SK-N-SH (cell line): ENCODE measurements at regions of chr17 and their contacts with region 1.

Region 1: GRCh38 chr17:59753522-59754467 is 46.3 kb downstream of the VMP1 start:
- DNase-seq: peak; percentile 78
- H3K4me3 ChIP-seq: peak overlapping the region in 1 of 2 experiments; percentile 40; a peak in 1 of 4 replicates
- H3K27ac ChIP-seq: peak overlapping the region; percentile 91 to 99
- H3K4me1 ChIP-seq: peaks cover 0 to 40% of the 10 kb centered on the region in 2 experiments; a peak in 3 of 4 replicates
- H3K27me3 ChIP-seq: no peaks in the 10 kb centered on the region
- CTCF ChIP-seq: peak; percentile 92
- EP300 ChIP-seq: no peak
- RAD21 ChIP-seq: peak; percentile 98

Region 2: GRCh38 chr17:59693582-59693981 is 60.2 kb before region 1 on chr17:
- CTCF ChIA-PET with region 1: no interaction called
- POLR2A ChIA-PET with region 1: no interaction called
- DNase-seq: no peak
- H3K4me3 ChIP-seq: no peak overlapping the region
- H3K27ac ChIP-seq: no peak overlapping the region
- H3K4me1 ChIP-seq: peaks cover 0 to 2% of the 10 kb centered on the region in 2 experiments; a peak in 2 of 4 replicates
- H3K27me3 ChIP-seq: no peaks in the 10 kb centered on the region
- CTCF ChIP-seq: no peak
- EP300 ChIP-seq: no peak
- RAD21 ChIP-seq: no peak

Region 3: GRCh38 chr17:59734226-59734625 is 19.6 kb before region 1 on chr17:
- CTCF ChIA-PET with region 1: interaction called, 15 read pairs
- POLR2A ChIA-PET with region 1: no interaction called
- DNase-seq: no peak
- H3K4me3 ChIP-seq: no peak overlapping the region
- H3K27ac ChIP-seq: no peak overlapping the region
- H3K4me1 ChIP-seq: no peaks in the 10 kb centered on the region
- H3K27me3 ChIP-seq: no peaks in the 10 kb centered on the region
- CTCF ChIP-seq: no peak
- EP300 ChIP-seq: no peak
- RAD21 ChIP-seq: no peak

Region 4: DNA sequence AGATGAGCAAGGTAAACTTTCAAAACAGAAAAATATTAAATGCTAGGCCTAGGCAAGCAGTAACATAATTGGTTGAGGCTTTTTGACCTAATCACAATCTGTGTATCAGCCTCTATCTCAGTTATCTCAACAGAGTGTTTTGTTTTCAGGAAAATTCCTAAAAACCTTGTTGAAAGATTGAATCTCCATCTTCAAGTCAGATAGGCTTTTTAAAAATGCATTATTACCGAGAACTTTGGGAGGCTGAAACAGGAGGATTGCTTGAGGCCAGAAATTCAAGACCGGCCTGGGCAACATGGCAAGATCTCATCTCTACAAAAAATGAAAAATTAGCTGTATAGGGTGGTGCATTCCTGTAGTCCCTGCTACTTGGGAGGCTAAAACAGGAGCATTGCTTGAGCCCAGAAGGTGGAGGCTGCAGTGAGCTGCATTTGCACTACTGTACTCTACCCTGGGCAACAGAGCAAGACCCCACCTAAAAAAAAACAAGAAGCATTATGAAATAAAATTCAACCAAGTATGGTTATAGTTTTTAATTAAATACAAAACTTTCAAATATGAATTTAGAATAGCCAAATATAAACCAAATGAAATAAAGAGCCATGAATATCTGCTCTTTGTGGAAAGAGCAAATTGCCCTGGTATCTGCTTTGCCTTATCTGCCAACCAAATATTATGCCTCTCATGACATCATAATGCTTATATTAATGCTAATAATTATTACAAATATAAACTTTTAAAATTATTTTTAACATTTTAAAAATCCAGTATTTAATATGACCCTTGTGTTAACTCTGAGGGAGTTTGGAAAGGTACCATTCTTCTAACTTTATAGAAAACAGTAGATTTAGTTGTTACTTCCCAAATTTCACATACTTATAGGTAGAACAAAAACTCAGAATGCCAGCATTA is 22.2 kb after region 1 on chr17:
- CTCF ChIA-PET with region 1: interaction called, 12 read pairs
- POLR2A ChIA-PET with region 1: no interaction called
- DNase-seq: no peak
- H3K4me3 ChIP-seq: no peak overlapping the region
- H3K27ac ChIP-seq: peak overlapping the region in 1 of 2 experiments; percentile 26; a peak in 2 of 4 replicates
- H3K4me1 ChIP-seq: 0 out of 4 replicates have a peak, but pooled peaks cover 0 to 10% of the 10 kb centered on the region in 2 experiments
- H3K27me3 ChIP-seq: no peaks in the 10 kb centered on the region
- CTCF ChIP-seq: no peak
- EP300 ChIP-seq: no peak
- RAD21 ChIP-seq: no peak

Region 5: GRCh38 chr17:59830007-59830630 is 76.3 kb after region 1 on chr17:
- CTCF ChIA-PET with region 1: interaction called, 25 read pairs
- POLR2A ChIA-PET with region 1: no interaction called
- DNase-seq: no peak
- H3K4me3 ChIP-seq: peak overlapping the region in 1 of 2 experiments; percentile 48; a peak in 3 of 4 replicates
- H3K27ac ChIP-seq: peak overlapping the region; percentile 87 to 100
- H3K4me1 ChIP-seq: peaks cover 14 to 64% of the 10 kb centered on the region in 2 experiments
- H3K27me3 ChIP-seq: no peaks in the 10 kb centered on the region
- CTCF ChIP-seq: no peak
- EP300 ChIP-seq: peak in 1 of 2 experiments; percentile 59; a peak in 1 of 4 replicates
- RAD21 ChIP-seq: no peak

Region 6: DNA sequence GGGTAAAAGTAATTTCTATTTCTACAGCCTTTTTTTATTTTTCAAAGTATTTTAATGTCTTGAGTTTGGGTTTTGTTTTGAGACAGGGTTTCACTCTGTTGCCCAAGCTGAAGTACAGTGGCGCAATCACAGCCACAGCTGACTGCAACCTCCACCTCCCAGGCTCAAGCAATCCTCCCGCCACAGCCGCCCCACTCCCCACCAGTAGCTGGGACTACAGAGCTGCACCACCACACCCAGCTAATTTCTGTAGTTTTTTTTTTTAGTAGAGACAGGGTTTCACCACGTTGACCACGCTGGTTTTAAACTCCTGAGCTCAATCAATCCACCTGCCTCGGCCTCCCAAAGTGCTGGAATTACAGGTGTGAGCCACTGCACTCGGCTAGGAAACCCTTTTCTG is 95.0 kb after region 1 on chr17:
- CTCF ChIA-PET with region 1: interaction called, 16 read pairs
- POLR2A ChIA-PET with region 1: no interaction called
- DNase-seq: no peak
- H3K4me3 ChIP-seq: no peak overlapping the region
- H3K27ac ChIP-seq: no peak overlapping the region
- H3K4me1 ChIP-seq: peaks cover 4 to 36% of the 10 kb centered on the region in 2 experiments; a peak in 3 of 4 replicates
- H3K27me3 ChIP-seq: no peaks in the 10 kb centered on the region
- CTCF ChIP-seq: no peak
- EP300 ChIP-seq: no peak
- RAD21 ChIP-seq: no peak

Region 7: GRCh38 chr17:59914274-59914854 is 160.6 kb after region 1 on chr17:
- CTCF ChIA-PET with region 1: interaction called, 26 read pairs
- POLR2A ChIA-PET with region 1: no interaction called
- DNase-seq: peak; percentile 75
- H3K4me3 ChIP-seq: no peak overlapping the region
- H3K27ac ChIP-seq: no peak overlapping the region
- H3K4me1 ChIP-seq: no peaks in the 10 kb centered on the region
- H3K27me3 ChIP-seq: no peaks in the 10 kb centered on the region
- CTCF ChIP-seq: peak; percentile 84
- EP300 ChIP-seq: no peak
- RAD21 ChIP-seq: peak; percentile 72

Region 8: DNA sequence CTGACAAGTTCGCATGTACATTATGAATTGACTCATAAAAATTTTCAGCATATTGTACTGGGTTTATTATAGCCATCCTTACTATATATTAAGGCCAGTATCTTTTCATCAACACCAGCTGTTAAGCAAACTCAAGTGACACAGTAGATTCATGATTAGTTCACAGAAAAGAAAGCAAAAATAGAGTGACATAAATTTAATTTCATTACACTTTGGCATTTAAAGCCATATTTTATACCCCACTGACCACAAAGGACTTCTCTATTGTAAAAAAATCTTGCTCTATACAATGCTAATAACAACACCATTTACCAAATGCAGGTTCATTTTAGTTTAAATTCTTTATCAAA is 1857.9 kb after region 1 on chr17:
- CTCF ChIA-PET with region 1: no interaction called
- POLR2A ChIA-PET with region 1: no interaction called
- DNase-seq: no peak
- H3K4me3 ChIP-seq: no peak overlapping the region
- H3K27ac ChIP-seq: no peak overlapping the region
- H3K4me1 ChIP-seq: no peaks in the 10 kb centered on the region; a peak in 3 of 4 replicates
- H3K27me3 ChIP-seq: no peaks in the 10 kb centered on the region
- CTCF ChIP-seq: no peak
- EP300 ChIP-seq: no peak
- RAD21 ChIP-seq: no peak